Body of pancreas (tissue), 4 donors: ENCODE measurements at regions of chr3 and their contacts with region 1.

Region 1: GRCh38 chr3:100465892-100466777 is 26.3 kb upstream of the TMEM45A start:
- DNase-seq: no peak
- ATAC-seq: no peak
- H3K4me3 ChIP-seq: no peak overlapping the region
- H3K27ac ChIP-seq: no peak overlapping the region
- H3K4me1 ChIP-seq: peaks cover 7% of the 10 kb centered on the region
- H3K27me3 ChIP-seq: no peaks in the 10 kb centered on the region
- CTCF ChIP-seq: no peak
- POLR2A ChIP-seq: no peak

Region 2: GRCh38 chr3:100329800-100330489 is 136.2 kb before region 1 on chr3:
- intact Hi-C with region 1: no loop called
- DNase-seq: peak; percentile 29 to 47 (median 47)
- ATAC-seq: peak; percentile 49
- H3K4me3 ChIP-seq: no peak overlapping the region
- H3K27ac ChIP-seq: no peak overlapping the region
- H3K4me1 ChIP-seq: peaks cover 4% of the 10 kb centered on the region
- H3K27me3 ChIP-seq: no peaks in the 10 kb centered on the region
- CTCF ChIP-seq: no peak
- POLR2A ChIP-seq: no peak

Region 3: DNA sequence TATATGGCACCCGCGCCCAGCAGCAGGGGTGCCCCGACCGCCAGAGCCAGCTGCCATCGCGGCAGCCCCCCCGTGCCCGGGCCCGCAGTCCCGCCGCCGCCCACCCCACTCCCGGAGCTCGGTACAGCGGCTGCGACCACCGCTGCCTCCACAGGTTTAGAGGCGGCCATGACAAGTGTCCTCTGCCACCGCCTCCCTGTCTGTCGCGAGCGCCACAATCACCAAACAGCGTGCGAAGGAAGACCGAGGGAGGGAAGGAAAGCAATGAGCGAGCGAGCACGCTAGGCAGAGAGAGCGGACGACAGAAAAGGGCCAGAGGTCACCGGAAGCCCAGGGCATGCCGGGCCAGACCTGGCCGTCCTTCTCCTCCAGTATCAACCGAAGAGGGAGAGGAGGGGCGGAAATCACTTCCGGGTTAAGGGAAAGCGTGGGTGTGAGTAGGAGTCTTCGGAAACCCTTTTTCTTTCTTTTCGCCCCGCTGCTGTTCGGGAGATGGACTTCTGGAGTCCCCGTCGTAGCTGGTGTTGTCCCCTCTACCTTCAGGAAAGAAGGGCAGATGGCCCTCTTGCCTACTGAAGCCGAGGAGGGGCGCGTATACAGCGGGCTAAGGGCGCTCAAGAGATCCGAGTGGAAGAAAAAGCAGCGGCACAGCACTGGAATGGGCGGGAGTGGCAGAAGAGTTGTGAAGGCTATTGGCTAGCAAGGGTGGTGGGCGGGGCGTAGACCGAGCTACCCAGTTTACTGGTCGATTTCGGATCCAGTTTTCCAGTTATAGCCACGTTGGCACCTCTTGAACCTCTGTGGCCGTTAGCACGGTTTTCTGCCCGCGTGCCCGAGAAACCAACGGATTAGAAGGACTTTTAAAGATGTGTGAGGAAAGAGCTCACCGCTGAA is 65.1 kb before region 1 on chr3 and contains the starts of genes LNP1 and TOMM70:
- intact Hi-C with region 1: no loop called
- DNase-seq: peak; percentile 98 to 99 (median 98)
- ATAC-seq: peak; percentile 96
- H3K4me3 ChIP-seq: peak within 1 kb of the TSS; percentile 87 to 90
- H3K27ac ChIP-seq: peak within 1 kb of the TSS; percentile 70 to 91 (median 84)
- H3K4me1 ChIP-seq: peaks cover 43% of the 10 kb centered on the region
- H3K27me3 ChIP-seq: no peaks in the 10 kb centered on the region
- CTCF ChIP-seq: peak in 1 of 7 experiments; percentile 4
- POLR2A ChIP-seq: peak; percentile 72 to 97 (median 96)
- total RNA-seq, gene LNP1: 4.6 to 6.2 TPM
- total RNA-seq, gene TOMM70: 17.1 to 25.9 TPM

Region 4: GRCh38 chr3:100588251-100588650 is 122.1 kb after region 1 on chr3:
- intact Hi-C with region 1: loop called (anchors 5 kb)
- DNase-seq: no peak
- ATAC-seq: no peak
- H3K4me3 ChIP-seq: no peak overlapping the region
- H3K27ac ChIP-seq: no peak overlapping the region
- H3K4me1 ChIP-seq: peaks cover 10% of the 10 kb centered on the region
- H3K27me3 ChIP-seq: no peaks in the 10 kb centered on the region
- CTCF ChIP-seq: no peak
- POLR2A ChIP-seq: no peak